KBM-7 (cell line): ENCODE measurements at regions of chr2 and their contacts with region 1.

Region 1: DNA sequence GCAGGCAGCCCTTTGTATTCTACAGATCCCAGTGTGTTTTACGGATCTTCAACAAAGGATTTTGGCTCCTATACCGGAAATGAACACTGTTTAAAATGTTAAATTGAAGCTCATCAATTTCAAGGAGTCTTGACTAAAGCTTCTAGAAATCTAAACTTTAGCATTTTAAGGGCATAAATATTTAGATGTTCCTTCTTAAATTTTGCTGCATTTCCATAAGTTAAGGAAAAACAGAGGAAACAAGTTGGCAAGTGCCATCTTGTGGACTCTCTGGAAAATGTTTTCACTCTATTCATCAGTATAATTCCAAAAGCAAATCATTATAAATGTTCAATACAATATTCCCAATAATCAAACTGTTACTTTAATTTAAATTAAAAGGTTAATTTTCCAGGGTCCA is 19.6 kb downstream of the CHN1 start:
- DNase-seq: no peak

Region 2: GRCh38 chr2:174771631-174772471 is 213.8 kb before region 1 on chr2:
- in situ Hi-C with region 1: loop called (anchors 25 kb)
- DNase-seq: no peak

Region 3: GRCh38 chr2:175709248-175709647 is 723.6 kb after region 1 on chr2:
- in situ Hi-C with region 1: no loop called
- DNase-seq: no peak